ENCODE measurements at regions of chr18 and their contacts with region 1.

Region 1: DNA sequence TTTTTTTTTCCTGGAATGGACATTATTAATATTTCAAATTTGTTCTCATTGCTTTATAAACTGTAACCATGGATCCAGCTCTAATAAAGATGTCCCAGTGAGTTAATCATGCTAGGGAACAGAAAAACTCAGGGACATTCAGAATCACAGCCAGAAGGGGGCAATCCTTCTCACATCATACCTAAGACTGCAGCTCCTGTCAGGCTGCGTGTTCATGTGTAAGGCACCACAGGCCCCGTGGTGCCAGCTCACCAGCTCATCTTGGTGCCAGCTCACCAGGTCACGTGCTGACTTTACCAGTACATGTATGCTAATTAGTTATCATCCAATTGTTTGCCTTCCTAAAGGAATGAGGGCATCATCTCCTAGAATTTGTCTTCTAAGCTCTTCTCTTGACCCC is 84.7 kb upstream of the NEDD4L start:
- DNase-seq: peak; percentile 66
- ATAC-seq: peak; percentile 96
- H3K4me3 ChIP-seq: no peak overlapping the region; a peak in 1 of 6 replicates
- H3K27ac ChIP-seq: no peak overlapping the region
- H3K4me1 ChIP-seq: peaks cover 30% of the 10 kb centered on the region
- H3K27me3 ChIP-seq: no peaks in the 10 kb centered on the region
- CTCF ChIP-seq: peak; percentile 83
- EP300 ChIP-seq: no peak
- POLR2A ChIP-seq: no peak
- RAD21 ChIP-seq: peak; percentile 62; the same call in 1 of the 2 replicates

Region 2: GRCh38 chr18:58117786-58118403 is 158.6 kb after region 1 on chr18:
- CTCF ChIA-PET with region 1: interaction called, 8 read pairs
- POLR2A ChIA-PET with region 1: no interaction called
- in situ Hi-C with region 1: loop called (anchors 10 kb)
- intact Hi-C with region 1: loop called (anchors 1 kb)
- DNase-seq: peak; percentile 69
- ATAC-seq: peak; percentile 71
- H3K4me3 ChIP-seq: no peak overlapping the region; a peak in 1 of 6 replicates
- H3K27ac ChIP-seq: peak overlapping the region; percentile 26
- H3K4me1 ChIP-seq: peaks cover 27% of the 10 kb centered on the region
- H3K27me3 ChIP-seq: no peaks in the 10 kb centered on the region
- CTCF ChIP-seq: no peak
- EP300 ChIP-seq: no peak
- POLR2A ChIP-seq: no peak
- RAD21 ChIP-seq: no peak

Region 3: DNA sequence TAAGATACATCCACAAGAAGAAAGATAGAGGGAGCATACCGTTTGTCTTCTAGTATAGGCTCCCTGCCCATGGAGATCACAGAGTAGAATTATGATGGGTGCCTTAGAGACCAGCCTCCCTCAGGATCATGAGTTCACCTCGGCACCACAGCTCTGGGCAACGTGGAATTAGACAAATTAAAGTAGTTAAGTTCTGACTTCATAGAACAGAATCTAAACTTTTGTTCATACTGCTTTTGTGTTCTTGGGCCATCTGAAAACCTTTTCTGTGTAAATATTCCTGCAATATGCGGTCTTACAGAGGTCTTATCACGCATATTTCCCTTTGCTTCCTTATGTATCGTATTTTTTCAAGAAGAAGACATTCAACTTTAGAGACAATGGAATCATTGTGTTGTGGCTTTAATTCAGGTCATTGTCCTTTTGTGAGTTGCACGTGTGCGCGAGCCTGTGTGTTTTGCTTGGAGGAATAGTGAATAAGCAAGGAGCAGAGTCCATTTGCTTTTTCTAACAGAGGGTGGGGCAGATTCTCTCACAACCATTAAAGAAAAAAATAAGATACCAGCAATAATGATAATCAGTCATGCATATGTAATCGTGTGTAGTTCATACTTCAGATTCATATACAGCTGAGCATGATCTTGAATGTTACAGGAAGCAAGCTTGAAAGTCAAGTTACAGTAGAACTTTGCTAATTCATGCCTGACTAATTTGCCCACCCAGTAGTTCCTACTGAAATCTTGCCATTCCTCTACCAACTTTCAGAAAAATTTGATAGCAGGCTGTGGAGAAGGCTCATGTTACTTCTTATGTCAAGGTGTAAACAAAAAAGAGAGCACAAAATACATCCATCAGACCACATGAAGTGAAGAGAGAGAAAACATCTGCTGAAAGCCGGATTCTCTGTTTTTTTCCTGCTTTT is 328.3 kb after region 1 on chr18:
- CTCF ChIA-PET with region 1: no interaction called
- POLR2A ChIA-PET with region 1: no interaction called
- in situ Hi-C with region 1: no loop called
- intact Hi-C with region 1: no loop called
- DNase-seq: peak; percentile 81
- ATAC-seq: peak; percentile 72
- H3K4me3 ChIP-seq: peak overlapping the region in 2 of 3 experiments; percentile 9 to 10; a peak in 2 of 6 replicates
- H3K27ac ChIP-seq: peak overlapping the region; percentile 97
- H3K4me1 ChIP-seq: peaks cover 67% of the 10 kb centered on the region
- H3K27me3 ChIP-seq: no peaks in the 10 kb centered on the region
- CTCF ChIP-seq: no peak
- EP300 ChIP-seq: peak in 1 of 2 experiments; percentile 46; a peak in 1 of 4 replicates
- POLR2A ChIP-seq: no peak
- RAD21 ChIP-seq: no peak

Measured in HepG2 (cell line).